Activated CD4-positive, alpha-beta T cell treated with anti-CD3 and anti-CD28 coated beads for 36 hours (primary cell): ENCODE measurements at regions of chr12 and their contacts with region 1.

Region 1: GRCh38 chr12:91877022-91877421 is 268.6 kb downstream of the BTG1 start:
- DNase-seq: peak; percentile 88
- ATAC-seq: peak; percentile 97
- H3K4me3 Mint-ChIP-seq: peak overlapping the region; percentile 55
- H3K27ac Mint-ChIP-seq: peak overlapping the region; percentile 97
- H3K4me1 Mint-ChIP-seq: peaks cover 71% of the 10 kb centered on the region
- H3K27me3 Mint-ChIP-seq: no peaks in the 10 kb centered on the region

Region 2: DNA sequence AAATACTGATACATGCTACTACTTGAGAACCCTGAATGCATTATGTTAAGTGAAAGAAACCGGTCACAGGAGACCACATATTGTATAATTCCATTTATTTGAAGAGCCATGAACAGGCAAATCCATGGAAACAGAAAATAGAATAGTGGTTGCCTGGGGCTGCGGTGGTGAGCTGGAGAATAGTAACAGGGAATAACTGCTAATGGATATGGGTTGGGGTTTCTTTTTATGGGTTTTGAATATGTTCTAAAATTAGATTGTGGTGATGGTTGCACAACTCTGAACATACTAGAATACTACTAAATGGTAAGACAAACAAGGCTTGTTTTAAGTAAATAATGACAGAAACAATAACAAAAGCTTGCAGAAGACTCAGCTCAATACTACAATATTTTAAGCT is 24.4 kb before region 1 on chr12:
- CTCF ChIA-PET with region 1: interaction called, 4 read pairs
- POLR2A ChIA-PET with region 1: no interaction called
- intact Hi-C with region 1: loop called in 1 of 2 experiments (anchors 2 kb)
- DNase-seq: no peak
- ATAC-seq: no peak
- H3K4me3 Mint-ChIP-seq: no peak overlapping the region
- H3K27ac Mint-ChIP-seq: no peak overlapping the region
- H3K4me1 Mint-ChIP-seq: peaks cover 18% of the 10 kb centered on the region
- H3K27me3 Mint-ChIP-seq: no peaks in the 10 kb centered on the region

Region 3: GRCh38 chr12:92065018-92065499 is 188.0 kb after region 1 on chr12:
- CTCF ChIA-PET with region 1: no interaction called
- POLR2A ChIA-PET with region 1: interaction called, 9 read pairs
- intact Hi-C with region 1: loop called in 1 of 2 experiments (anchors 1 kb)
- DNase-seq: peak; percentile 71
- ATAC-seq: peak; percentile 76
- H3K4me3 Mint-ChIP-seq: peak overlapping the region; percentile 30
- H3K27ac Mint-ChIP-seq: peak overlapping the region; percentile 89
- H3K4me1 Mint-ChIP-seq: peaks cover 57% of the 10 kb centered on the region
- H3K27me3 Mint-ChIP-seq: no peaks in the 10 kb centered on the region

Region 4: GRCh38 chr12:92208613-92209121 is 331.6 kb after region 1 on chr12:
- CTCF ChIA-PET with region 1: no interaction called
- POLR2A ChIA-PET with region 1: no interaction called
- intact Hi-C with region 1: loop called in 1 of 2 experiments (anchors 2 kb)
- DNase-seq: peak; percentile 40
- ATAC-seq: peak; percentile 77
- H3K4me3 Mint-ChIP-seq: peak overlapping the region; percentile 67
- H3K27ac Mint-ChIP-seq: peak overlapping the region; percentile 81
- H3K4me1 Mint-ChIP-seq: peaks cover 32% of the 10 kb centered on the region
- H3K27me3 Mint-ChIP-seq: no peaks in the 10 kb centered on the region

Region 5: DNA sequence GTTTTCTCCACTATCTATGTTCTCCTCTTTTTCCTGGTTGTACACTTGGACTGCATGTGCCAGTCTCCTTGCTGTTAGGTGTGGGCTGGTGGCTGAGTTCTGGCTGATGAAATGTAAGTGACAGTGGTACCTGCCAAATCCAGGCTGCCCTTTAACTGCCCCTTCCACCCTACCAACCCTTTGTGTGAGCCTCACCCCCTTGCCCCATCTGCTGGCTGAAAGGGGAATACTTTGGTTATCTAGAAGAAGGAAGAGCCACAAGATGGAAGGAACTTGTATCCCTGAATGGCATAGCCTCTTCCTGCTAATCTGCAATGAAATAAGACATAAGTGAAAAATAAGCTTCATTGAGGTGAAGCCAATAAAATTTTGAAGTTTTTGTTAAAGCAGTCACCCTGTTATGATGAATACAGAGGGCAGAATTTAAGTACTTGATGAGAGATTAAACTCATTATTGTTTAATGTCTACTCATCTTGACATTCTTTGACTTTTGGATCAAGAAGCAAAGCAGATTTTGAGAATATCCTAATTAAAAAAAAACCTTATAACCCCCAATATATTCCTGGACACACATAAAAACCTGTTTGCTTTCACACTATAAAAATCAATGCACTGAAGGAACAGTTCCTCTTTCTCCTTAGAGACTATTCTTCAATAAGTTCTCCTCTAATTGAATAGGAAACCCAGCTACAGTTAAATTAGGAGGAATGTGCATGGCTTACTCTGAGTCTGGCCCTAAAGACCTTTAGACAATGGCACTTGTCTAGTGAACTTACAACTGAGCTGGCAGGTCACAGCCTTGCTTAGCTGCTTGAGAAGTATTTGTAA is 531.3 kb after region 1 on chr12:
- CTCF ChIA-PET with region 1: no interaction called
- POLR2A ChIA-PET with region 1: no interaction called
- intact Hi-C with region 1: loop called in 1 of 2 experiments (anchors 10 kb)
- DNase-seq: peak; percentile 75
- ATAC-seq: peak; percentile 35
- H3K4me3 Mint-ChIP-seq: no peak overlapping the region
- H3K27ac Mint-ChIP-seq: peak overlapping the region; percentile 60
- H3K4me1 Mint-ChIP-seq: peaks cover 53% of the 10 kb centered on the region
- H3K27me3 Mint-ChIP-seq: no peaks in the 10 kb centered on the region

Region 6: DNA sequence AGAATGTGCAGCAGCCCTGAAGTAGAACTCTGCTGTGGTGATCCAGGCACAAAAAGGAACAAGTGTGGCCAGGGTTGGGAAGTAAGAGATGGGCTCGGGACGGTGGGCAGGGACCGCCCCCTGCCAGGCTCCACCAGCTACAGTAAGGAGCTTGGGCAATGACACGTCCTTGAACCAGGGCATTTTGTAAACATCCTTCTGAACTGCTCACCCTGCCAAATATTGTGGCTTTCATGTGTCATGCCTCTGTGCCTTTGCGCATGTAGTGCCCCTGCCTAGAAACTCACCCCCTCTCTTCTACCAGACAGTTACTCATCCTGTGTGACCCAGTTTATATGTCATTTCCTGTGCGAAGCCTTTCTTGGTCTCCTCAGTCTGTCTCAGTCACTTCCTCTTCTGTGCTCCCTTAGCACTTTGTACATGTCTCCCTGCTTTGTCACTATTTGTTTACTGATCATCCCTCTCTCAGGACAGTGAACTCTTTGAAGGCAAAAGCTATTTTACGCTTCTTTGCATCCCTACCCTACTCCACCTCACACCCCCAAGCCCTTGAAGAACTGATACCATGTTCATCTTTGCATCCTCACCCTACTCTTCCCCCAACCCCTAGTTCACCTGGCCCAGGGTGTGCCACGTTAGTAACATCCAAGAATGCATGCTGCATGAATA is 716.8 kb after region 1 on chr12:
- CTCF ChIA-PET with region 1: no interaction called
- POLR2A ChIA-PET with region 1: no interaction called
- intact Hi-C with region 1: loop called (anchors 5 to 10 kb)
- DNase-seq: peak; percentile 83
- ATAC-seq: peak; percentile 95
- H3K4me3 Mint-ChIP-seq: peak overlapping the region; percentile 5
- H3K27ac Mint-ChIP-seq: peak overlapping the region; percentile 92
- H3K4me1 Mint-ChIP-seq: peaks cover 84% of the 10 kb centered on the region
- H3K27me3 Mint-ChIP-seq: no peaks in the 10 kb centered on the region

Region 7: GRCh38 chr12:93019975-93020630 is 1143.1 kb after region 1 on chr12:
- CTCF ChIA-PET with region 1: no interaction called
- POLR2A ChIA-PET with region 1: no interaction called
- intact Hi-C with region 1: no loop called
- DNase-seq: no peak
- ATAC-seq: no peak
- H3K4me3 Mint-ChIP-seq: no peak overlapping the region
- H3K27ac Mint-ChIP-seq: no peak overlapping the region
- H3K4me1 Mint-ChIP-seq: no peaks in the 10 kb centered on the region
- H3K27me3 Mint-ChIP-seq: no peaks in the 10 kb centered on the region